ENCODE measurements at regions of chr4 and their contacts with region 1.

Region 1: DNA sequence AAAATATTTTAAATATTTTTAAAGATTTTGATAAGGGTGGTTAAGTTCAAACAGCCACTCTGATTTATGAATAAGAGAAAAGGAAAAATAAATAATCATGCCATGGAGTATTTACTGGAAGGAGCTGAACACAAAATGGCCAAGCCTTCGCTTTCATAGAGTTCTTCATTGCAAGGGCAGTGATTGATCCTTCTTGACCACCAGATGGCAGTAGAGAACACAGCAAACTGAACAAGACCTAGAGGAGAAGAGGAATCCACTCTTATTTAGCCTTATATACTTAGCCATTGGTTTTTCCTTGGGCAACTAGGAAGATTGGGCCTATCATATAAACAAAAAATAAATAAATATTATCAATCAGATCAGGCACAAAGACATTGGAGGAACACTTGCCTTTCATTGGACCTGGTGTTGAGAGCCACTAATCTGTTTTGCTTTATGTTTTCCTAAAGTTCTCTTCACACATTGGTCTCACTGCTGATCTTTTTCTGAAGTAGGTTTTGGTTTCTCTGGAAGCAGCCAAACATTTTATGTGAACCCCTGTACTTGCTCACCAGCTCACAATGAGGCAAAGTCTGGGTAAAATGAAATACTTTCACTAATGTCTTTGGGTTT is 58.1 kb upstream of the PARM1 start:
- DNase-seq: no peak
- H3K4me3 ChIP-seq: no peak overlapping the region
- H3K27ac ChIP-seq: no peak overlapping the region
- H3K4me1 ChIP-seq: peaks cover 0 to 15% (median 0%) of the 10 kb centered on the region in 4 donors
- H3K27me3 ChIP-seq: no peaks in the 10 kb centered on the region
- CTCF ChIP-seq: peak; percentile 80 to 97 (median 89)
- EP300 ChIP-seq: no peak
- POLR2A ChIP-seq: no peak

Region 2: DNA sequence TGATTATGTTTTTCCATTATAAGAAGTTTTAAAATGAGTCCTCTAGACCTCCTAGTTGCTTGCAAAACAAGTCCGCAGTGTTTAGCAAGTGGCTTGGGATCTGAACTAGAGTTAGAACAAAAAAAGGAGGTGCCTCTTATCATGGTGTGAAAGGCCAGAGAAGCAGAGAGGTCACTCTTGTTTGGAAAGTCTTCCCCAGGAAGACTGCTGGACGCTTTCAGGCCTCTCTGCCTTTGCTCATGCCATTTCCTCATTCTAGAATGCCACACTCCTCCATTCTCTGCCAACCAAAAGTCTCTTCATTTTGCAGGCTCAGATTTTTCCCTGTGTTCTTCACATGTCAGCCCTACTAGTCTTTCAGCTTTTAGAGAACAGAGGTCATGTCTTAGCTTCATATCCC is 72.9 kb after region 1 on chr4:
- in situ Hi-C with region 1: no loop called
- intact Hi-C with region 1: loop called (anchors 2 kb)
- DNase-seq: no peak
- H3K4me3 ChIP-seq: no peak overlapping the region
- H3K27ac ChIP-seq: peak overlapping the region; percentile 64 to 82 (median 78)
- H3K4me1 ChIP-seq: peaks cover 0 to 49% (median 18%) of the 10 kb centered on the region in 4 donors
- H3K27me3 ChIP-seq: no peaks in the 10 kb centered on the region
- CTCF ChIP-seq: no peak
- EP300 ChIP-seq: no peak
- POLR2A ChIP-seq: no peak

Measured in transverse colon (tissue), 4 donors.